ENCODE measurements at regions of chrX and their contacts with region 1.

Region 1: DNA sequence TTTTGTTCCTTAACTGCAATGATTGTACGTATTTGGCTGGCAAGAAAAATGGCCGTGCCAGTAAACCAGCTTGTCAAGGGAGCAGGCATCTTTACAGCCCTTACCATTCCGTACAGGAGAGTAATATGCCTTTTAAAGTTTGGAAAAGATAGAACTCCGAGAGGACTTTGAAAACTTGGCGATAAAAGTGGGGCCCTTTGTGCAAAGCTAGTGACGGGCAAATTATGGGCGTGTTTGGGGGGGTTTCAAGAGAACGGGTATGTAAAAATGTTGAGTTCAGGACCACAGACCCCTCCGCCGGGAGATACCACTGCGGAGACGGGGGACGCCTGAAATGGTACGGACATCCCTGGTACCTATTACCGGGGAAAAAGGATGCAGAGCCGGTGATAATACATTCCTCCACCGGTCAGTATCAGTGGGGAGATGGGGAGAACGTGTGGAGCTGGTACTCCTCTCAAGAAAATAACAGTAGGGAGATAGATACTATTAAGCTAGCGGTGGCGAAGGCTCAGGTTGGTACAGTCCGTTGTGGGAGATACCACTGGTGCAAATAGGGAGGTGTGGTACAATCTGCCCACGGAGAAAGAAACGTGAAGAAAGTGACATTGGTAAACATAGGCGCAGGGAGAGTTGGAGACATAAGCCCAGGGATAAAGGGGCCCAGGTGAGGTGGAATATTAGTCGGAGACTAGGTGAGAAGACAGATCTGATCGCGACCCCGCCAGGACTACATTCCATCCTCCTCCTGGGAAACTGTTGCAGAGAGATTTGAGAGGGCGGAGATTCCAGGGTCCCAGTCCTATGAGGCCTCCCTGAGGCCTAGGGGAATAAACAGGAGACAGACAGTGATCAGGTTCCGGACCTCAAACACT is 14.5 kb downstream of the SPACA5 start:
- DNase-seq: peak; percentile 80 to 82
- ATAC-seq: peak; percentile 80 to 93 (median 90)
- H3K4me3 ChIP-seq: peak overlapping the region; percentile 34 to 66 (median 58)
- H3K27ac ChIP-seq: peak overlapping the region; percentile 71 to 96 (median 92)
- H3K4me1 ChIP-seq: peaks cover 0 to 11% (median 0%) of the 10 kb centered on the region in 9 donors
- H3K27me3 ChIP-seq: no peaks in the 10 kb centered on the region
- CTCF ChIP-seq: no peak

Region 2: DNA sequence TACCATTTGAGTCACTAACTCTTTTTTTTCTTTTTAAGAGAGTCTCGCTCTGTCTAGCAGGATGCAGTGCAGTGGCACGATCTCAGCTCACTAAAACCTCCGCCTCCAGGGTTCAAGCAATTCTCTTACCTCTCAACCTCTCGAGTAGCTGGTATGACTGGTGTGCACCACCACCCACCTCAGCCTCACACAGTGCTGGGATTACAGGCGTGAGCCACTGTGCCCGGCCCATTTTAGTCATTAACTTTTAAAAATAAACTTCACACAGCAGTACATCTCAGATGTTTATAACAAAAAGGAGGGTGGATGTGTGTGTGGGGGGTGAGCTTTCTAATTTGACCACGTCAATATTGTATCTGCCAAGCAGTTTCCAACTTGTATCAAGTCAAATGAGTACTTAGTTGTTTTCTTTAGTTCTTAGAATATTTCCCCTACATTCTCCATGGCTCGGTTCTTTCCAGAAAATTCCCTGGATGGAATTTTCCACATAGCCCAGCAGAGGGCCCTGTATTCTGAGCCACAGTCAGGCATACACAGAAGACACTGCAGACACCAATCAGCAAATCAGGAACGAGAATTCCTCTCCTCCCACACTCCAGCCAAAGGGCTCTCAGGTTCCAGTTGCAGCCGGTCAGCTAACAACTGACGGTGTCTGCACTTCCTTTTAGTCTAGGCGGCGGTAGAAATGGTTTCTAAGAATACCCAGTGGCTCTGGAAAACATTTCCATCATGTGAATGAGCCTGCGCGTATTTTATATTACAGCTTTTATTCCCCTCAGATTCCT is 480.3 kb before region 1 on chrX:
- intact Hi-C with region 1: loop called in 1 of 10 experiments (anchors 10 kb)
- DNase-seq: peak; percentile 39 to 85
- ATAC-seq: peak; percentile 93 to 99 (median 99)
- H3K4me3 ChIP-seq: peak overlapping the region in 1 of 10 donors; percentile 12
- H3K27ac ChIP-seq: peak overlapping the region; percentile 34 to 86 (median 73)
- H3K4me1 ChIP-seq: peaks cover 0 to 25% (median 9%) of the 10 kb centered on the region in 9 donors
- H3K27me3 ChIP-seq: peaks cover 0 to 4% (median 0%) of the 10 kb centered on the region in 7 donors
- CTCF ChIP-seq: peak; percentile 22 to 72 (median 59)

Region 3: DNA sequence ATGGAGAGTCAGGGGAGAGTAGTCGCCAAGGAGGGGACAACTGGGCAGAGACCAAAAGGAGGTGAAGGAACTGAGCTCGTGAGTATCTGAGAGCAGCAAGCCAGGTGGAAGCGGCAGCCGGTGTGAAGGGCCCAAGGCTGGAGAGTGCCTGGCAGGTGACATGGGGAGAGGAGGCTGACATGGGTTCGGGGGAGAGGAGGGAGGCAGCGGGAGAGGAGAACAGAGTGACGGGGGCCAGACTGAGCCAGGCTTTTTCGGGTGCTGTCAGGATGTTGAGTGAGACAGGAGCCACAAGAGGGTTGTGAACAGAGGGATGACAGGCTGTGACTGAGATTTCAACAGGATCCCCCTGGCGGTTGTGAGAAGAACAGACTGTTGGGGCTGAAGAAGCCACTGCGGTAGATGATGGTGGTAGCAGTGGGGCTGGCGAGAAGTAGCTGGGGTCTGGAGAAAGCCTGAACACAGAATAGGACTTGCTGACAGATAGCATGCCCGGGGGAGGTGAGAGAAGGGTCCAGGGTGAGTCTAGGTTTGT is 376.6 kb before region 1 on chrX:
- intact Hi-C with region 1: loop called in 1 of 10 experiments (anchors 10 kb)
- DNase-seq: no peak
- ATAC-seq: peak; percentile 42 to 88 (median 75)
- H3K4me3 ChIP-seq: no peak overlapping the region
- H3K27ac ChIP-seq: peak overlapping the region in 1 of 10 donors; percentile 22
- H3K4me1 ChIP-seq: peaks cover 0 to 32% (median 10%) of the 10 kb centered on the region in 9 donors
- H3K27me3 ChIP-seq: no peaks in the 10 kb centered on the region
- CTCF ChIP-seq: peak in 7 of 9 donors; percentile 29 to 51 (median 40)

Region 4: DNA sequence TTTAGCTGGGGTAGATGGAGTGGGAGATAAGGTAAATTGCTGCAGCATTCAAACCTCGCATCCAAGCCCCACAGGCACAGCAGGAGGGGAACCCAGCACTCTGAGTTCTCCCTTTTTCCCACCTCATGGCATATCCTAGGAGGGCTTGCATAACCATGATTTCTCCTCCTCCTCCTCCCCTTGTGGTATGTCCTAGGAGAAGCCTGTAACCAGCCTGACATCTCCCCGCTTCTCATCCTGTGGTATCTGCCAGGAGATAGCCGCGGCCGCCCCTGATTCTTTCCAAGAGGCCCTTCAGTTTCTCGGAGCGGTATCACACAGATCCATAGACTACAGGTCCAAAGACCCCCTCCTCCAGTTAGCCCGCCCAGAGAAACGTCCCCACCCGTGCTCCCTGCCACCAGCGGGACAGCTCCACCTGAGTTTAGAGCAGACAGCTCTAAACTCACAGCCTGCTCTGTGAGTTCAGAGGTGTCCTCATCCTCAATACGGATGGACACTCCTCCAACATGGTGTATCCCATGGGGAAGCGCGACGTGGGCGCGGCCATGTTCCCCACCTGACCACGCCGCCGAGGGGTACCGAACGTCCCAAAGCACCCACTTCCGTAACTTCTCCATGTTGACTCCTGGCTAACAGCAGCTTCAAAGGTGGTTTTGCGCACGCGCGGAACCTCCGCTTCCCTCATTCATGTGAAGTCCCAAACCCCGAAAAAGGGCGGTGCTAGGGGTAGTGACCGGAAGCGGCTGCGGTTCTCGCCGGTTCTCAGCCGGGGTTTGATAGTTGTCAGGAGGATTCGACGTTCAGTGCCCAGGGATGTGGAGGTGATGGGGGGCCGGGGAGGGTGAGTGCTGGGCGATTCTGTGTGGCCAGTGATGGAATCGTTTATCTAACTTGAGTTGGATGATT is 184.8 kb before region 1 on chrX and contains the start of gene ZNF81:
- intact Hi-C with region 1: loop called in 7 of 10 experiments (anchors 5 to 10 kb)
- DNase-seq: peak; percentile 95 to 96
- ATAC-seq: peak; percentile 98 to 100 (median 99)
- H3K4me3 ChIP-seq: peak within 1 kb of the TSS; percentile 38 to 69 (median 58)
- H3K27ac ChIP-seq: peak within 1 kb of the TSS in 9 of 10 donors; percentile 39 to 82 (median 75)
- H3K4me1 ChIP-seq: peaks cover 0 to 19% (median 6%) of the 10 kb centered on the region in 9 donors
- H3K27me3 ChIP-seq: no peaks in the 10 kb centered on the region
- CTCF ChIP-seq: no peak
- total RNA-seq, gene ZNF81: 4.1 to 10.1 (median 7.3) TPM

Region 5: GRCh38 chrX:47927212-47927611 is 94.1 kb before region 1 on chrX:
- intact Hi-C with region 1: no loop called
- DNase-seq: no peak
- ATAC-seq: no peak
- H3K4me3 ChIP-seq: no peak overlapping the region
- H3K27ac ChIP-seq: no peak overlapping the region
- H3K4me1 ChIP-seq: no peaks in the 10 kb centered on the region
- H3K27me3 ChIP-seq: no peaks in the 10 kb centered on the region
- CTCF ChIP-seq: no peak

Region 6: DNA sequence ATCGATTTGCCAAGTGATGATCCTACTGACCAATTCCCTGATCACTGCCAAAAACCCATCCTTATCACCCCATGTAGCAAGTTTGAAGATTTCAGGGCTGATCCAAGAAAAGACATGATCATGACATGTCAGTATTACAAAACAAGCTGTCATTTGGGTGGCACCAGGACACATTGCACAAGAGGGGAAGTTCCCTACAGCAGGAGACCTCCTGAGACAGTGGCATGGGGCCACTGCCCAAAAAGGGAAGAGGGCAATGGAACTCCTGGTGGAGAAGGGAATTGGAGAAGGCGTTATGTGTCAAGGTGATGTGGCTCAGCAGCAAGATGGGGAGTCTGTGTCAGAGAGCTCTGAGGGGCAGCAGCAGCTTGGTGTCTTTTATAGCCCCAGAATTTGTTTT is 60.9 kb before region 1 on chrX:
- intact Hi-C with region 1: loop called in 1 of 10 experiments (anchors 10 kb)
- DNase-seq: no peak
- ATAC-seq: no peak
- H3K4me3 ChIP-seq: no peak overlapping the region
- H3K27ac ChIP-seq: no peak overlapping the region
- H3K4me1 ChIP-seq: no peaks in the 10 kb centered on the region
- H3K27me3 ChIP-seq: no peaks in the 10 kb centered on the region
- CTCF ChIP-seq: no peak

Region 7: DNA sequence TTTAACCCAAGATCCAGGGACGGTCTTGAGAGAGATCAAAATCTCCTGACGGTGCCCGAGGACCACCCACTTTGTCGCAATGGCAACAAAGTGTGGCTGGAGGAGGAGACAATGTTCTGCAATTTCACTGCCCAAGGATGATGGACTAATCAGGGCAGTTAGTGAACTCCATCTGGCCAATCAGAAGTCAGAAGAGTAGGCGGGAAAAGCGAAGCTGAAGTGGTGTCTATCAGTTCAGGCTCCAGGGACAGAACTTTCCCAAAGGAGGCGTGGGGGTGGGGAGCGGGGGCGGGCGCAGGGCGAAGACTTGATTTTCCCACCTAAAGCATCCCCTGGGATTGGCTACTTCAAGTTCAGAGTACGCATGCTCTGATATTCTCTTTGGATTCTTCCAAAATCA is 134.8 kb after region 1 on chrX:
- intact Hi-C with region 1: no loop called
- DNase-seq: no peak
- ATAC-seq: no peak
- H3K4me3 ChIP-seq: no peak overlapping the region
- H3K27ac ChIP-seq: no peak overlapping the region
- H3K4me1 ChIP-seq: no peaks in the 10 kb centered on the region
- H3K27me3 ChIP-seq: peaks cover 0 to 16% (median 0%) of the 10 kb centered on the region in 7 donors
- CTCF ChIP-seq: no peak

Measured in heart right ventricle (tissue), 16 donors.